ENCODE measurements at regions of chr1 and their contacts with region 1.

Region 1: DNA sequence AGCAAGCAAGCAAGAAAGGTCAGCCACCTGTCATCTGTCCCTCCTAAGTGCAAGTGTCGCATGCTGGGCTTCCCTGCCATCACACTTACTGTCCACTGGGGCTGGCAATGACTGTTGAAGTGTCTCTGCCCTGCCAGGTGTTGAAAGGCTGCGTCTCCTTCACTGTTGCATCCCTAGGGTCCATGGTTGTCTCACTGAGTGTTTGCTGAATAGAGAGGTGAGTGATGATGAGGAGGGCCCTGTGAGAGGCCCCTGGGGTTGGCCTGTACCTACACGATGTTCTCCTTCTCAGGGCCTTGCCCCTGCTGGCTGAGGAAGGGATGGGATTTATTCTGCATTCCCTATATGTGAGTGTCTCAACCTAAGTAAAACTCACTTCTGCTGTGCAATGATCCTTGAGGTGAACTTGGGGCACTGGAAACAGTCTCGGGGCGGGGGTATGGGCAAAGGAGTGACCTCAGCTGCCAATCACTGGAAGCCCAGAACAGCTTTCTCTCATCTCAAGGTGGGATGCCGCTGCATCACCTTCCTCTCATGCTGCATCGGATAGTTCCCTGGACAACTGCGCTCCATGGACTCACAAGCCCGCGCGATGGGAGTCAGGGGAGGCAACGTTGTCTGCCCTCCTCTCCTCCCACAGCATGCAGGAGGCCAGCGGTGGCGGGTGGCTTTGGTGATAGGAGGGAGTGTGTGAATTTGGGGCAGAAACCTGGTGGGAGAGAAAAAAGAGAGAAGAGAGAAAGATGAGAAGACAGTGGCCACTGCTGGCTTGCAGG is 35.8 kb upstream of the SOX13 start:
- DNase-seq: no peak
- ATAC-seq: peak; percentile 48
- H3K4me3 ChIP-seq: no peak overlapping the region
- H3K27ac ChIP-seq: no peak overlapping the region
- H3K4me1 ChIP-seq: no peaks in the 10 kb centered on the region
- H3K27me3 ChIP-seq: no peaks in the 10 kb centered on the region
- CTCF ChIP-seq: peak; percentile 33; the same call in 1 of the 2 replicates

Region 2: GRCh38 chr1:204065174-204065985 is 28.3 kb after region 1 on chr1:
- CTCF ChIA-PET with region 1: no interaction called
- POLR2A ChIA-PET with region 1: interaction called, 11 read pairs
- intact Hi-C with region 1: no loop called
- DNase-seq: peak; percentile 16
- ATAC-seq: no peak
- H3K4me3 ChIP-seq: no peak overlapping the region
- H3K27ac ChIP-seq: no peak overlapping the region
- H3K4me1 ChIP-seq: no peaks in the 10 kb centered on the region
- H3K27me3 ChIP-seq: no peaks in the 10 kb centered on the region
- CTCF ChIP-seq: no peak

Region 3: GRCh38 chr1:204123376-204123775 is 86.3 kb after region 1 on chr1:
- CTCF ChIA-PET with region 1: no interaction called
- POLR2A ChIA-PET with region 1: no interaction called
- intact Hi-C with region 1: no loop called
- DNase-seq: no peak
- ATAC-seq: no peak
- H3K4me3 ChIP-seq: no peak overlapping the region
- H3K27ac ChIP-seq: no peak overlapping the region
- H3K4me1 ChIP-seq: peaks cover 19% of the 10 kb centered on the region
- H3K27me3 ChIP-seq: no peaks in the 10 kb centered on the region
- CTCF ChIP-seq: peak; percentile 73